PC-3 (cell line): ENCODE measurements at regions of chr12 and their contacts with region 1.

Region 1: GRCh38 chr12:6944381-6945186 is 762 bp downstream of the C12orf57 start:
- DNase-seq: peak; percentile 89
- ATAC-seq: peak; percentile 39
- H3K4me3 ChIP-seq: peak overlapping the region; percentile 72
- H3K27ac ChIP-seq: peak overlapping the region; percentile 94
- H3K4me1 ChIP-seq: peaks cover 18% of the 10 kb centered on the region
- H3K27me3 ChIP-seq: no peaks in the 10 kb centered on the region
- CTCF ChIP-seq: peak; percentile 77

Region 2: GRCh38 chr12:6884539-6884938 is 60.0 kb before region 1 on chr12:
- CTCF ChIA-PET with region 1: no interaction called
- POLR2A ChIA-PET with region 1: interaction called, 17 read pairs
- intact Hi-C with region 1: no loop called
- DNase-seq: no peak
- ATAC-seq: no peak
- H3K4me3 ChIP-seq: no peak overlapping the region
- H3K27ac ChIP-seq: no peak overlapping the region
- H3K4me1 ChIP-seq: peaks cover 5% of the 10 kb centered on the region; the same call in 1 of the 2 replicates
- H3K27me3 ChIP-seq: no peaks in the 10 kb centered on the region
- CTCF ChIP-seq: no peak

Region 3: GRCh38 chr12:6927379-6928024 is 17.1 kb before region 1 on chr12 and contains the start of gene ATN1:
- CTCF ChIA-PET with region 1: interaction called, 9 read pairs
- POLR2A ChIA-PET with region 1: interaction called, 18 read pairs
- intact Hi-C with region 1: no loop called
- DNase-seq: peak; percentile 53
- ATAC-seq: peak; percentile 26
- H3K4me3 ChIP-seq: peak within 1 kb of the TSS; percentile 93
- H3K27ac ChIP-seq: no peak within 1 kb of the TSS
- H3K4me1 ChIP-seq: peaks cover 43% of the 10 kb centered on the region
- H3K27me3 ChIP-seq: no peaks in the 10 kb centered on the region
- CTCF ChIP-seq: no peak
- total RNA-seq, gene ATN1: 11.6 and 41.5 TPM in 2 replicates

Region 4: GRCh38 chr12:6965026-6965661 is 20.6 kb after region 1 on chr12:
- CTCF ChIA-PET with region 1: interaction called, 10 read pairs
- POLR2A ChIA-PET with region 1: no interaction called
- intact Hi-C with region 1: loop called (anchors 1 kb)
- DNase-seq: peak; percentile 64
- ATAC-seq: peak; percentile 62
- H3K4me3 ChIP-seq: no peak overlapping the region
- H3K27ac ChIP-seq: no peak overlapping the region
- H3K4me1 ChIP-seq: peaks cover 25% of the 10 kb centered on the region
- H3K27me3 ChIP-seq: no peaks in the 10 kb centered on the region
- CTCF ChIP-seq: peak; percentile 77

Region 5: DNA sequence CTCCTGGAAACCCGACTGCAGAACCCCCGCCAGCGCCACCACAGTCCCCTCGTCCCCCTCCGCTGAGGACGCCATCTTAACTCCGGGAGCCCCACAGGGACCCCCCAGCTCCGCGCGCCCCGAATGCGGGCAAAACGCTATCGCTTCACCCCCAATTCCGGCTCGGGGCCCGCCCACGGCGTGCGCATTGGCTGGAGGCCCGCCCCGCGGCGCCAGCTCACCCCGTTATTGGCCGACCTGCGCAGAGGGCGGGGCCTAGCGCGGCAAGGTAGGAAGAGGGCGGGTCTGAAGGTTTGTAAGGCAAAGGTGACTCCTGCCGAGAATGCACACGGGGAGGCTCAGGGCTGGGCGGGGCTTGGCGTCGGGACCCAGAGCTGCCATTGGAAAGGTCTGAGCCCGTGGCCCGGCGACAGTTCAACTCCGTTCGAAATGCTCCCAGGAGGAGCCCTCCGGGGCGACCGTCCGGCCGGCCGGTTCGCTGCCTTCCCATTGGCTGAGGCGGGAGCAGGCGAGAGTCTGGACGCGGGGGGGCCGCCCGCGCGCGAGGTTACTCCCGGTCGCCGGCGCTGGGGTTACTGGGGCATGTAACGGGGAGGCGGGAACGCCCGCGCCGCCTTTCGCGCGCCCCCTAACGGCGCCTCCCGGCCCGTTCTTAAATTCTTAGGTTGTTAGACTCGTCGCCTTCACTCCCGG is 73.9 kb after region 1 on chr12 and contains the start of gene LPCAT3:
- CTCF ChIA-PET with region 1: interaction called, 5 read pairs
- POLR2A ChIA-PET with region 1: no interaction called
- intact Hi-C with region 1: loop called (anchors 2 kb)
- DNase-seq: peak; percentile 90
- ATAC-seq: peak; percentile 90
- H3K4me3 ChIP-seq: peak within 1 kb of the TSS; percentile 97
- H3K27ac ChIP-seq: peak within 1 kb of the TSS; percentile 92
- H3K4me1 ChIP-seq: peaks cover 15% of the 10 kb centered on the region
- H3K27me3 ChIP-seq: no peaks in the 10 kb centered on the region
- CTCF ChIP-seq: peak; percentile 69
- total RNA-seq, gene LPCAT3: 16.3 and 21.5 TPM in 2 replicates

Region 6: GRCh38 chr12:7108796-7109571 is 164.4 kb after region 1 on chr12 and contains the start of gene C1RL:
- CTCF ChIA-PET with region 1: no interaction called
- POLR2A ChIA-PET with region 1: interaction called, 10 read pairs
- intact Hi-C with region 1: loop called (anchors 1 kb)
- DNase-seq: peak; percentile 81
- ATAC-seq: peak; percentile 68
- H3K4me3 ChIP-seq: peak within 1 kb of the TSS; percentile 92
- H3K27ac ChIP-seq: peak within 1 kb of the TSS; percentile 58
- H3K4me1 ChIP-seq: no peaks in the 10 kb centered on the region; the same call in 1 of the 2 replicates
- H3K27me3 ChIP-seq: no peaks in the 10 kb centered on the region
- CTCF ChIP-seq: peak; percentile 83
- total RNA-seq, gene C1RL: 8.2 and 8.9 TPM in 2 replicates